Psoas muscle (tissue), 8 donors: ENCODE measurements at regions of chr11 and their contacts with region 1.

Region 1: DNA sequence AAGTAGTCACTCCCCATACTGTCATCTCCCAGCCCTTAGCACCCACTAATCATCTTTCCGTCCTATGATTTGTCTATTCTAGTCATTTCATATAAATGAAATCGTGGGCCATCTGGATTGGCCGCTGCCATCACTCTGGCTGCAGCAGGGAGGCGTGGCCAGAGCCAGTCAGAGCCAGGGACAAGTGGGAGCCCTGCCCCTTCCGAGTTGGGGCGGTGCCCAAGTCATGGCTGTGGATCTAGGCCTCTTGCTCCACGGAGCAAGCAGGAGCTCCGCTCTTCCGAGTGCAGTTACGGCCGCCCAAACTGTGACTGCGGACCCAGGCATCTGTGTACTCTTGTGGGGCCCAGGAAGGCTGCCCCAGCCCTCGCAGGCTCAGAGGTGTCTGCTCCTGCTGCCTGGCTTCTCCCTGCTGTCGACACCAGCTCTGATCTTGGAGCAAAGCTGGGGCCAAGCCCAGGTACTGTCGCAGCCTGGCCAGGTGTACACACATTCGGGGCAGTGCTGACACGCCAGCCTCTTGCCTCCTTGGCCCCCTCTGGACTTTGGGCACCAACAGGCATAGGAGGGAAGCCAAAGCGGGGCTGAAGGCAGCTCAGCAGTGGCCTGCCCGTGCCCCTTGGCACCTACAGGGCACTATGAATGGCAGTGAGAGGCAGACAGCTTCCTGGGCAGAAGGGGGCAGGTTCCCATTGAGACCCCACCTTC is 8.4 kb downstream of the MRPL48 start:
- DNase-seq: peak in 1 of 2 donors; percentile 56
- ATAC-seq: no peak
- H3K4me3 ChIP-seq: no peak overlapping the region
- H3K27ac ChIP-seq: no peak overlapping the region
- H3K4me1 ChIP-seq: peaks cover 11% of the 10 kb centered on the region
- H3K27me3 ChIP-seq: no peaks in the 10 kb centered on the region
- CTCF ChIP-seq: no peak

Region 2: GRCh38 chr11:73876424-73877300 is 80.6 kb after region 1 on chr11 and contains the starts of genes COA4 and PAAF1:
- intact Hi-C with region 1: loop called in 1 of 2 experiments (anchors 5 kb)
- DNase-seq: peak; percentile 92 to 96
- ATAC-seq: peak; percentile 96 to 99 (median 98)
- H3K4me3 ChIP-seq: peak within 1 kb of the TSS; percentile 84
- H3K27ac ChIP-seq: peak within 1 kb of the TSS; percentile 94
- H3K4me1 ChIP-seq: peaks cover 22% of the 10 kb centered on the region
- H3K27me3 ChIP-seq: no peaks in the 10 kb centered on the region
- CTCF ChIP-seq: no peak
- total RNA-seq, gene COA4: 59.6 to 74.8 (median 68.2) TPM
- total RNA-seq, gene PAAF1: 6.6 to 9.5 (median 8.3) TPM